ENCODE measurements at regions of chr5 and their contacts with region 1.

Region 1: GRCh38 chr5:110590187-110590586 is 136.3 kb downstream of the TMEM232 start:
- DNase-seq: peak; percentile 24
- H3K4me3 ChIP-seq: no peak overlapping the region
- H3K27ac ChIP-seq: no peak overlapping the region
- H3K4me1 ChIP-seq: no peaks in the 10 kb centered on the region
- H3K27me3 ChIP-seq: no peaks in the 10 kb centered on the region
- CTCF ChIP-seq: peak; percentile 54

Region 2: GRCh38 chr5:110441035-110441434 is 149.2 kb before region 1 on chr5:
- CTCF ChIA-PET with region 1: no interaction called
- POLR2A ChIA-PET with region 1: no interaction called
- intact Hi-C with region 1: loop called (anchors 5 kb)
- DNase-seq: peak; percentile 55
- H3K4me3 ChIP-seq: no peak overlapping the region
- H3K27ac ChIP-seq: no peak overlapping the region
- H3K4me1 ChIP-seq: no peaks in the 10 kb centered on the region
- H3K27me3 ChIP-seq: no peaks in the 10 kb centered on the region
- CTCF ChIP-seq: peak; percentile 63